ENCODE measurements at regions of chr21 and their contacts with region 1.

Region 1: GRCh38 chr21:34630536-34631143 is 15.7 kb upstream of the RCAN1 start:
- DNase-seq: peak in 3 of 9 experiments; percentile 16 to 75 (median 68)
- ATAC-seq: peak; percentile 72
- H3K4me3 ChIP-seq: no peak overlapping the region
- H3K4me3 Mint-ChIP-seq: no peak overlapping the region
- H3K27ac ChIP-seq: no peak overlapping the region
- H3K27ac Mint-ChIP-seq: no peak overlapping the region
- H3K4me1 ChIP-seq: no peaks in the 10 kb centered on the region
- H3K4me1 Mint-ChIP-seq: no peaks in the 10 kb centered on the region
- H3K27me3 ChIP-seq: no peaks in the 10 kb centered on the region
- H3K27me3 Mint-ChIP-seq: peaks cover 16% of the 10 kb centered on the region
- CTCF ChIP-seq: peak; percentile 84

Region 2: DNA sequence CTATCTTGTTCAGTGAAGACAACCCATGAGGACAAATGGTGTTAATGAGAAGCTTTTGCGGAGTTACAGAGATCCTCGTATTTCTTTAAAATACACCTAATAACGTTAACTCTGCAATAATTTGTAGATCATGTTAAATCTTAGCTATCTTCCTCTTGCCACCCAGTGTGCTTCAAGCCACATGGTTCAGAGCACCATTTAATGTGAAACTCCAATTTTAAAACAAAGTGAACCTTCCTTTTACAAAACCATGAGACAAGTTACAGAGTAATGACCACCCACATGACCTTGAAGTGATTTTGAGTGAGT is 268.6 kb before region 1 on chr21:
- CTCF ChIA-PET with region 1: interaction called, 45 read pairs
- POLR2A ChIA-PET with region 1: no interaction called
- intact Hi-C with region 1: loop called (anchors 1 kb)
- DNase-seq: no peak
- ATAC-seq: peak; percentile 9
- H3K4me3 ChIP-seq: no peak overlapping the region
- H3K4me3 Mint-ChIP-seq: no peak overlapping the region
- H3K27ac ChIP-seq: no peak overlapping the region
- H3K27ac Mint-ChIP-seq: no peak overlapping the region
- H3K4me1 ChIP-seq: no peaks in the 10 kb centered on the region
- H3K4me1 Mint-ChIP-seq: peaks cover 6% of the 10 kb centered on the region
- H3K27me3 ChIP-seq: peaks cover 0 to 3% of the 10 kb centered on the region in 2 experiments
- H3K27me3 Mint-ChIP-seq: peaks cover 4% of the 10 kb centered on the region
- CTCF ChIP-seq: peak; percentile 46

Region 3: DNA sequence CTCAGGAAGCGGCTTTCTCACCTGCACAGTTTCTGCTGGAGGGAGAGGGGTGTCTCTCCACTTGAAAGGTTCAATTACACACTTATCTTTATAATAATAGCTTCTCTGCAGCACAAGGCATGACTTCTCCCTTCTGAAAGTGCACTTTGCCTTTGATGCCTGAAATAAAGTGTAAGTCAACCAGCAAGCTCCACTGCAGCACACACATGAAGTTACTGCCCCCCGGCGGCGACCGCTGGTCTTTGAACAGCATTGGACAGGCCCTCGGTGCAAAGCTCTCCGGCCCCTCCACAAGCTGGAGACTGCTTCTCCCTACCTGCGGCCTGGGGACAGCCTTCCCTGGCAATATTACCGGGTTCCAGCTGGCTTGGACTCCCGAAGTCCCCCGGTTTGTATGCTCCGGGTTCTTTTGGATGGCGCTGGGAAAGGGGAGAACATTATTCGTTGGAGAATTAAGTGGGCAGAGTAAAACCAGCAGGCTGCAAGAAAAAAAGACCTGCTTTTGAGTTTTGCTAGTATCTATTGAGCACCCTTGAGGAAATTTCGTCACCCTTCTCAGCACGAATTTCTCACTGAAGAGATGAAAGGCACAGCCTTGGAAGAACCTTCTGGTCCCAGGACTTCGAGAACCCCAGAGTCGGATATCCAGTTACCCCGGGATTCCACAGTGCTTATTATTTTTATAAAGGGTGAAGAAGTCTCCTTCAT is 27.5 kb before region 1 on chr21:
- CTCF ChIA-PET with region 1: interaction called, 13 read pairs
- POLR2A ChIA-PET with region 1: no interaction called
- intact Hi-C with region 1: no loop called
- DNase-seq: peak in 8 of 9 experiments; percentile 6 to 64 (median 57)
- ATAC-seq: peak; percentile 64
- H3K4me3 ChIP-seq: no peak overlapping the region
- H3K4me3 Mint-ChIP-seq: no peak overlapping the region
- H3K27ac ChIP-seq: no peak overlapping the region
- H3K27ac Mint-ChIP-seq: no peak overlapping the region
- H3K4me1 ChIP-seq: no peaks in the 10 kb centered on the region
- H3K4me1 Mint-ChIP-seq: no peaks in the 10 kb centered on the region
- H3K27me3 ChIP-seq: no peaks in the 10 kb centered on the region
- H3K27me3 Mint-ChIP-seq: no peaks in the 10 kb centered on the region
- CTCF ChIP-seq: peak; percentile 30

Region 4: DNA sequence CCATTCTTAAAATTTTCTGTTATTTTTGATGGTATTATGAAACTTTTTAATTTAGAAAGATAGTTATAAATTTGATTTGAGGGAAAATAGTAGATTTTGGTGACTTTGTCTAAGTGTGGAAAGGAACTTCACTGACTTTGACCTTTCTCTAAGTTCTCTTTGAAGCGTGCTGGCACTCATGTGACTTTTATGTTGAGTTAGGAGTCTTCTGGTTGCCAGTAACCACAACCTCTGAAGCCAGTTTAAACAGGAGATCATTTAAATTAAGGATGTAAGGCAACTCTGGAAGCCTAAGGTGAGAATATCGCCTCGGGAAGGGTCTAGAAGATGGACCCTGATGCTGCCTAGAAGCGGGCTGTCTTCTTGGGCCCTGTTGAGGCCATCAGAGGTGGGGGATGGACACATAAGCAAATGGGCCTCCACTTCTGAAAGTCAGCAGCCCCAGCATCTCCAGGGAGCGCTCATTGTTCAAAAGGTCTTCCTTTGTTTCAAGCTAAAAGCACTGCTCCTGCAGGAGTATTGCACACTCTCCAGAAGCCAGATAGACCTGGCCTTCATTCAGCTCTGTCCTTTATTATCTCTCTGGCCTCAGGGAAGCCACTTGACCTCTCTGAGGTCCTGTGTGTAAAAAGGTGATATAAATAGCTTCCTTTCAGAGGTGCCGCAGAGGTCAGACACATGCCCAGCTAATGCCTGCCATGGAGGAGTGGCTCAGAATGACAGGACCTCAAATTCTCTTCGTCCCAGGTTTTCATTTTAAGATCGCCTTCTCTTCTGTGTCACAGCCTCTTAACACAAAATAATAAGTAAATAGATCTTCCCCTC is 10.6 kb before region 1 on chr21:
- CTCF ChIA-PET with region 1: interaction called, 16 read pairs
- POLR2A ChIA-PET with region 1: no interaction called
- intact Hi-C with region 1: no loop called
- DNase-seq: no peak
- ATAC-seq: no peak
- H3K4me3 ChIP-seq: no peak overlapping the region
- H3K4me3 Mint-ChIP-seq: no peak overlapping the region
- H3K27ac ChIP-seq: no peak overlapping the region
- H3K27ac Mint-ChIP-seq: no peak overlapping the region
- H3K4me1 ChIP-seq: peaks cover 6% of the 10 kb centered on the region
- H3K4me1 Mint-ChIP-seq: peaks cover 2% of the 10 kb centered on the region
- H3K27me3 ChIP-seq: no peaks in the 10 kb centered on the region
- H3K27me3 Mint-ChIP-seq: peaks cover 16% of the 10 kb centered on the region
- CTCF ChIP-seq: no peak

Region 5: GRCh38 chr21:34702341-34703170 is 71.9 kb after region 1 on chr21:
- CTCF ChIA-PET with region 1: no interaction called
- POLR2A ChIA-PET with region 1: no interaction called
- intact Hi-C with region 1: no loop called
- DNase-seq: no peak
- ATAC-seq: no peak
- H3K4me3 ChIP-seq: no peak overlapping the region
- H3K4me3 Mint-ChIP-seq: no peak overlapping the region
- H3K27ac ChIP-seq: no peak overlapping the region
- H3K27ac Mint-ChIP-seq: no peak overlapping the region
- H3K4me1 ChIP-seq: peaks cover 8% of the 10 kb centered on the region
- H3K4me1 Mint-ChIP-seq: peaks cover 13% of the 10 kb centered on the region
- H3K27me3 ChIP-seq: no peaks in the 10 kb centered on the region
- H3K27me3 Mint-ChIP-seq: no peaks in the 10 kb centered on the region
- CTCF ChIP-seq: no peak

Region 6: GRCh38 chr21:34826836-34827235 is 196.2 kb after region 1 on chr21:
- CTCF ChIA-PET with region 1: no interaction called
- POLR2A ChIA-PET with region 1: no interaction called
- intact Hi-C with region 1: no loop called
- DNase-seq: no peak
- ATAC-seq: no peak
- H3K4me3 ChIP-seq: no peak overlapping the region
- H3K4me3 Mint-ChIP-seq: no peak overlapping the region
- H3K27ac ChIP-seq: no peak overlapping the region
- H3K27ac Mint-ChIP-seq: no peak overlapping the region
- H3K4me1 ChIP-seq: no peaks in the 10 kb centered on the region
- H3K4me1 Mint-ChIP-seq: peaks cover 10% of the 10 kb centered on the region
- H3K27me3 ChIP-seq: no peaks in the 10 kb centered on the region
- H3K27me3 Mint-ChIP-seq: no peaks in the 10 kb centered on the region
- CTCF ChIP-seq: no peak

Measured in CD8-positive, alpha-beta T cell (primary cell).